Activated CD8-positive, alpha-beta memory T cell treated with anti-CD3 and anti-CD28 coated beads, Interleukin-2, amount 10 ng/mL, durations not matched to agents 7 days and 5 days (primary cell): ENCODE measurements at regions of chr17 and their contacts with region 1.

Region 1: GRCh38 chr17:35141681-35142466 is at the start of gene NLE1:
- DNase-seq: peak; percentile 90
- ATAC-seq: peak; percentile 93
- H3K4me3 Mint-ChIP-seq: peak within 1 kb of the TSS; percentile 81
- H3K27ac Mint-ChIP-seq: peak within 1 kb of the TSS; percentile 81
- H3K4me1 Mint-ChIP-seq: peaks cover 16% of the 10 kb centered on the region
- H3K27me3 Mint-ChIP-seq: no peaks in the 10 kb centered on the region
- total RNA-seq, gene NLE1: 23.0 to 30.5 TPM

Region 2: DNA sequence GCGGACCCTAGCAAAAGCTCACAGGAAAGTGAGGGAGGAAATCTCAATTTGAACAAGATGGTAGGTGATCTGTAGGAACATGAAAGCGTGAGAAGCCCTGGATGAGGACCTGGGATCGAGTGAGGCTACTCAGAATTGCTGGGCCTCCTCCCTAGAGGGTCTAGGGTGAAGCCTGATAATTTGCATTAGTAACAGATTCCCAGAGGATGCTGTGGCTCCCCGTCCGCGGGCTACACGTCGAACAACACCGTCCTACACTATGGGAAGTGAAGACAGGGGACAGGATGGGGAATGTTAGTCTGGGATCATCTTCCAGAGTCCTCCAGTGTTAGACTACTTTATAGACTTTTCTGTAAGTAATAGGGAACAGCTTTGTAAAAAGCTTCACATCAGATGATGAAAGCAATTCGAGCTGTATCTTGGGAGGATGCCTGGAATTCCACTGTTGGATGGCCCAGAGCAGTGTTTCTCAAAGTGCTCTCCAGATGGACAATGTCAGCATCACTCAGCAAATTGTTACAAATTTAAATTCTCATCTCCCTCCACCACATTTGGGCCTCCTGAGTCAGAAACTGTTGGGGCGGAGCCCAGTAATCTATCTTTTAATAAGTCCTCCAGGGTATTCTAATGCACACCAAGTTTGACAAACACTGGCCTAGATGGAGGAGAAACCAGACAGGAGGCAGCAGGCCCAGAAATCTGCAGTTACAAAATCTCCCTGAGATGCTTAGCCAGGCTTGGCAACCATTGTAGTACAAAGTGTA is 13.9 kb before region 1 on chr17:
- CTCF ChIA-PET with region 1: interaction called, 11 read pairs
- DNase-seq: no peak
- ATAC-seq: no peak
- H3K4me3 Mint-ChIP-seq: no peak overlapping the region
- H3K27ac Mint-ChIP-seq: no peak overlapping the region
- H3K4me1 Mint-ChIP-seq: no peaks in the 10 kb centered on the region
- H3K27me3 Mint-ChIP-seq: no peaks in the 10 kb centered on the region